ENCODE measurements at regions of chr4 and their contacts with region 1.

Region 1: DNA sequence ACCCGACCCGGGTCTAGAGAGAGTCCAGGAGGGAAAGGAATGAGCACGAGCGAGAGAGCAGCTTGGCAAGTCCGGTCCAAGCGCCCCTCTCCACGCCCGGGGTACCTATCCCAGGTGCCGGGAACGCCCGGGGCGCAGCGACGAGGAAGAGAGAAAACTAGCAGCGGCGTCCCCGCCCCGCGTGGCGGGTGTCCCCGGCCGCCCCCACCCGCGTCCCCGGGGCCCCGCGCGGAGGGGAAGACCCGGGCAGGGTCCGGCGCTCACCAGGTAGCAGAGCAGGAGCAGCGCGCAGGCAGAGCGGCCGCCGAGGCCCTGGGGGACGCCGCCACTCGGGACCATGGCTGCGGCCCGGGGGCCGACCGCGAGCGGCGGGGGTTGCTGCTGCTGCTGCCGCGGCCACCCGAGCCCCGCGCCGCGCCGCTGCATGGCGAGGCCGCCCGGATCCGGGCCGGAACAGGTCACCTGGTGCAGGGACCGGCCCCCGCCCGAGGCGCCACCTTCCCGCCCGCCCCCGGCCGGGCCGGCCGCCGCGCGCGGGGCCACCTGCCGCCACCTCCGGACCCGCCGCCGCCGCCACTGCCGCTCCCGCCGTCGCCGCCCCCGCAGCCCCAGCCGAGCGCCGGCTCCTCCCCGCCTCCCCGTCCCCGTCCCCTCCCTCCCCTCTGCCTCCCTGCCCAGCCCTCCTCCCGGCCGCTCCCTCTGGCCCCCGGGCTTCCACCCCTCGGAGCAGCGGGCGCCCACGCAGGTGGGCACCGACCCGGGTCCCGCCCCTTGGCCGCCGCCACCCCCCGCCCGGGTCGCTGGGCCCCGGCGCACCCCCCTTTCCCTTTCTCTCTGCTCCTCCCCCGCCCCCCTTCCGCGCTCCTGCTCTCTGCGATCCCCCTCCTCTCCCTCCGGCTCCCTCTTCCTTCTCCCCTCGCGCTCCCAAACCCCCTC is at the start of gene SEL1L3:
- DNase-seq: no peak
- H3K4me3 ChIP-seq: peak within 1 kb of the TSS; percentile 50 to 70 (median 66)
- H3K27ac ChIP-seq: no peak within 1 kb of the TSS
- H3K4me1 ChIP-seq: peaks cover 11% of the 10 kb centered on the region
- H3K27me3 ChIP-seq: no peaks in the 10 kb centered on the region
- CTCF ChIP-seq: no peak
- total RNA-seq, gene SEL1L3: 25.0 to 101 TPM

Region 2: DNA sequence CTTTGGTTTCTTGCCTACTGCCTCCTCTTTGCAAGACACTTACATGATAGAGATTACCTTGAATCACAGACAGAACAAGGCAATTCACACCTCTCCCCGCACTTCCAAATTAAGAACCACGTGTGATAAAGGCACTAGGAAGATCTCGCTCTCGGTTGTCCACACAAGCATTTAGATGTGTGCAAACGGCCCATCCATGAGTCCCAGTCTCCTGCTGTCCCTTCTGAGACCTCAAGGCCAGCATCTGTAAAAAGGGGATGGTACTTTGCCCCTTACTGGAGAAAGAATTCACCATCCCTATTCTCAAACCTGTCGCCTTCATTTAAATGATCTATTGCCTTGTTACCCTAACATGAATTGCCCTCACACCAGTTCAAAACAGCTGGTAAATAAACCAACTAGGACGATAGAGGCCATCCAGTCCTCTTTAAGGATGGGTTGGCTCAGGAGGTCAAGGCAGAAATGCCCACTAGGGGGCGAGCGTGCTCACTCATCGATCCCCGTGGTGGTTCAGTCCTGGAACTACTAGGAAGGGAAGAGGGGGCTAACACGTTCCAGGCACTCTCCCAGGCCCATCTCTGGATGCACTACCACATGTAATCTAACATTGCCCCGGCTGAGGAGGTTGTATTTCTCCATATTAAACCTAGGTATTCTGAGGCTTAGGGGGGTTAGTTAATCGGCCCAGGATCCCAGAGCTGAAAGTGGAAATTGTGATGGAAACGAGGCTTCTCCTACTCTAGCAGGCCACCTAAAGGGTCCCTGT is 1374.1 kb before region 1 on chr4:
- CTCF ChIA-PET with region 1: no interaction called
- dilution Hi-C with region 1: no loop called
- in situ Hi-C with region 1: no loop called
- intact Hi-C with region 1: no loop called
- DNase-seq: peak; percentile 33
- H3K4me3 ChIP-seq: no peak overlapping the region
- H3K27ac ChIP-seq: no peak overlapping the region
- H3K4me1 ChIP-seq: no peaks in the 10 kb centered on the region
- H3K27me3 ChIP-seq: no peaks in the 10 kb centered on the region
- CTCF ChIP-seq: peak; percentile 89 to 98

Region 3: DNA sequence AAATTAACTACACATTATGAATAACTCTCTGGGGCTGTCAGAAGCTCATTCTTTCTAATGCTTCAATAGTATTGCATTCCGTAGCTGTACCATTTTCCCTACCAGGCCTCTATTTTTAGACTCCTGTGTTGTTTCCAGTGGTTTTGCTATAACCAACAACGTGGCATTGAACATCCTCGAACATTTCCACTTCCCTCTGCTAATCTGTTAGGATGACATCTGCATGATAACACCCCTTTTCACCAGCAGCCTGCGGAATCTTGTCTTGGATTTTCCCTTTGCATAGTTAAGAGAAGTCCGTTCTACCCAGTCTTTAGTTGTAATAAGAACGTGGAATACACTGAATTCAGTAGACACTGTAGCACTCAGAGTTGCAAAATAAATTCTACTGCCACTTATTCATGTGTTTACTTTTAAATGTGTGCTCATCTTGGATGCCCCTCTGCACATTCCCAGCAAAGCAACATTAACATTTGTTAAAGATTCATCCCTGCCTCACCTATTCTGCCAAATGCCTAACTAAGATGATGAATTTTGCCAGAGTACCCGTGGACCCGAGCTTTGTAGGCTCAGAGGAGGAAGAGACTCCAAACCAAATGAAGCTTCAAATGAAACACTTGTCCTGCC is 55.5 kb before region 1 on chr4:
- CTCF ChIA-PET with region 1: no interaction called
- dilution Hi-C with region 1: loop called (anchors 10 kb)
- in situ Hi-C with region 1: no loop called
- intact Hi-C with region 1: no loop called
- DNase-seq: no peak
- H3K4me3 ChIP-seq: no peak overlapping the region
- H3K27ac ChIP-seq: no peak overlapping the region
- H3K4me1 ChIP-seq: no peaks in the 10 kb centered on the region
- H3K27me3 ChIP-seq: no peaks in the 10 kb centered on the region
- CTCF ChIP-seq: no peak

Region 4: GRCh38 chr4:25903900-25904747 is 41.4 kb after region 1 on chr4:
- CTCF ChIA-PET with region 1: no interaction called
- dilution Hi-C with region 1: loop called (anchors 5 kb)
- in situ Hi-C with region 1: no loop called
- intact Hi-C with region 1: no loop called
- DNase-seq: no peak
- H3K4me3 ChIP-seq: no peak overlapping the region
- H3K27ac ChIP-seq: no peak overlapping the region
- H3K4me1 ChIP-seq: peaks cover 8% of the 10 kb centered on the region
- H3K27me3 ChIP-seq: no peaks in the 10 kb centered on the region
- CTCF ChIP-seq: no peak

Region 5: GRCh38 chr4:25913851-25914669 is 51.4 kb after region 1 on chr4 and contains the start of gene SMIM20:
- CTCF ChIA-PET with region 1: no interaction called
- dilution Hi-C with region 1: no loop called
- in situ Hi-C with region 1: no loop called
- intact Hi-C with region 1: loop called (anchors 1 kb)
- DNase-seq: peak; percentile 88
- H3K4me3 ChIP-seq: peak within 1 kb of the TSS; percentile 63 to 84 (median 68)
- H3K27ac ChIP-seq: peak within 1 kb of the TSS; percentile 73
- H3K4me1 ChIP-seq: peaks cover 4% of the 10 kb centered on the region
- H3K27me3 ChIP-seq: no peaks in the 10 kb centered on the region
- CTCF ChIP-seq: no peak
- total RNA-seq, gene SMIM20: 17.3 to 19.7 TPM

Measured in mammary epithelial cell (primary cell).